ENCODE measurements at regions of chrX and their contacts with region 1.

Region 1: DNA sequence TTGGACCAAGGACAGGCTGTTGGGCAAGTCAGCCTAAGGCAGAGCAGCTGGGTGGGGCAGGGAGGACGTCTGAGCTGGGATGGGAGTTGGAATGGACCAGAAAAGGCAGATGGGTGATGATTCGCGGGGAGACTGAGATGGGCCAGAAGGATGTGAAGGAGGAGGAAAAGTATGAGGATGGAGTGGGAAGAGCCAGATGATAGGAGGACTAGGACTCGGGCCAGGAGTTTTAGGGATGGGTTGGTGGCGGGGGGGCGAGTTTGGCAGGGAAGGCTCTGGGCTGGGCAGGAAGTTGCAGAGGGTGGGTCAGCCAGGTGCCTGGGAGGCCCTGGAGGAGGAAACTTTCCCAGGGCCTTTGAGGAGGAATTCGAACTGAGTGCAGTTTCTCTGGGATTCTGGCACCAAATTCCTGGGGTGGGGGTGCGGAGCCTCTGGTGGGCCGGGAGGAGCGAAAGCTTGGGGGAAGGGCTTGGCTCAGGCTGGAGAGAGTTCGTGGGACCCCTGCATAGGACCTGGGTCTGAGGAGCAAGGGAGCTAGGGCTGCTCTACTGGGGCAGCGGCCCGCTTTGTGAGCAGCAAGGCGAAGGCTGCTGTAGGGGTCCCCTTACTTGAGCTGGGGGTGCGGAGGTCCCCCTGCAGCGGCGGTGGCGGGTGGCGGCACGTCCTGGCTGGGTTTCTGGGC is 8.7 kb upstream of the TIMP1 start:
- DNase-seq: peak; percentile 77 to 86 (median 83)
- H3K4me3 ChIP-seq: peak overlapping the region; percentile 31
- H3K27ac ChIP-seq: peak overlapping the region; percentile 78 to 90
- H3K4me1 ChIP-seq: peaks cover 7% of the 10 kb centered on the region
- H3K27me3 ChIP-seq: no peaks in the 10 kb centered on the region
- CTCF ChIP-seq: no peak
- EP300 ChIP-seq: no peak
- POLR2A ChIP-seq: no peak

Region 2: GRCh38 chrX:46180258-46180687 is 1393.3 kb before region 1 on chrX:
- intact Hi-C with region 1: no loop called
- DNase-seq: no peak
- H3K4me3 ChIP-seq: no peak overlapping the region
- H3K27ac ChIP-seq: no peak overlapping the region
- H3K4me1 ChIP-seq: no peaks in the 10 kb centered on the region
- H3K27me3 ChIP-seq: no peaks in the 10 kb centered on the region
- CTCF ChIP-seq: no peak
- EP300 ChIP-seq: no peak
- POLR2A ChIP-seq: no peak

Region 3: DNA sequence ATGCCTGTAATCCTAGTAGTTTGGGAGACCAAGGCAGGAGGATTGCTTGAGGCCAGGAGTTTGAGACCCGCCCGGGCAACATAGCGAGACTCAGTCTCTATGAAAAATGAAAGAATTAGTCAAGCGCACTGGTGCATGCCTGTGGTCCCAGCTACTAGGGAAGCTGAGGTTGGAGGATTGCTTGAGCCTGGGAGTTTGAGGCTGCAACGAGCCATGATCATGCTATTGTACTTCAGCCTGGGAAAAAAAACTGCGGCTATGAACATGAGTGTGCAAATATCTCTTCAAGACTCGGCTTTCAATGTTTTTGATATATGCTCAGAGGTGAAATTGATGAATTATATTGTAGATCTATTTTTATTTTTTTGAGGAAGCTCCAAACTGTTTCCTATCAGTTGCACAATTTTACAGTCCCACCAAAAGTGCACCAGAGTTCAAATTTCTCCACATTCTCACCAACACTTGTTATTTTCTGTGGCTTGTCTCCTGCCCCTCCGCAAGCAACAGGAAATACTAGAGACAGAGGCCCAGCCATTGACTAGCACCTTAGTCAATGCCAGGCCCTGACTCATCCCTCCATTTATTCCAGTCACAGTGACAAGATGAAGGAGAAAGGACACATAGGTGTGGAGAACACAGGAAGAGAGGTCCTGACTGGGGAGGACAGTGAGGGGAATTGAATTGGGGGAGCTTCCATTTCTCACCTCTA is 57.4 kb before region 1 on chrX:
- intact Hi-C with region 1: loop called in 1 of 4 experiments (anchors 10 kb)
- DNase-seq: no peak
- H3K4me3 ChIP-seq: no peak overlapping the region
- H3K27ac ChIP-seq: no peak overlapping the region
- H3K4me1 ChIP-seq: no peaks in the 10 kb centered on the region
- H3K27me3 ChIP-seq: no peaks in the 10 kb centered on the region
- CTCF ChIP-seq: no peak
- EP300 ChIP-seq: no peak
- POLR2A ChIP-seq: no peak

Region 4: DNA sequence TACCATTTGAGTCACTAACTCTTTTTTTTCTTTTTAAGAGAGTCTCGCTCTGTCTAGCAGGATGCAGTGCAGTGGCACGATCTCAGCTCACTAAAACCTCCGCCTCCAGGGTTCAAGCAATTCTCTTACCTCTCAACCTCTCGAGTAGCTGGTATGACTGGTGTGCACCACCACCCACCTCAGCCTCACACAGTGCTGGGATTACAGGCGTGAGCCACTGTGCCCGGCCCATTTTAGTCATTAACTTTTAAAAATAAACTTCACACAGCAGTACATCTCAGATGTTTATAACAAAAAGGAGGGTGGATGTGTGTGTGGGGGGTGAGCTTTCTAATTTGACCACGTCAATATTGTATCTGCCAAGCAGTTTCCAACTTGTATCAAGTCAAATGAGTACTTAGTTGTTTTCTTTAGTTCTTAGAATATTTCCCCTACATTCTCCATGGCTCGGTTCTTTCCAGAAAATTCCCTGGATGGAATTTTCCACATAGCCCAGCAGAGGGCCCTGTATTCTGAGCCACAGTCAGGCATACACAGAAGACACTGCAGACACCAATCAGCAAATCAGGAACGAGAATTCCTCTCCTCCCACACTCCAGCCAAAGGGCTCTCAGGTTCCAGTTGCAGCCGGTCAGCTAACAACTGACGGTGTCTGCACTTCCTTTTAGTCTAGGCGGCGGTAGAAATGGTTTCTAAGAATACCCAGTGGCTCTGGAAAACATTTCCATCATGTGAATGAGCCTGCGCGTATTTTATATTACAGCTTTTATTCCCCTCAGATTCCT is 32.6 kb before region 1 on chrX:
- intact Hi-C with region 1: no loop called
- DNase-seq: peak; percentile 70 to 85 (median 76)
- H3K4me3 ChIP-seq: no peak overlapping the region
- H3K27ac ChIP-seq: peak overlapping the region; percentile 15 to 61
- H3K4me1 ChIP-seq: no peaks in the 10 kb centered on the region
- H3K27me3 ChIP-seq: no peaks in the 10 kb centered on the region
- CTCF ChIP-seq: peak; percentile 32 to 78 (median 66)
- EP300 ChIP-seq: no peak
- POLR2A ChIP-seq: peak; percentile 53

Region 5: GRCh38 chrX:47690175-47690574 is 116.6 kb after region 1 on chrX:
- intact Hi-C with region 1: no loop called
- DNase-seq: no peak
- H3K4me3 ChIP-seq: no peak overlapping the region
- H3K27ac ChIP-seq: no peak overlapping the region
- H3K4me1 ChIP-seq: no peaks in the 10 kb centered on the region
- H3K27me3 ChIP-seq: no peaks in the 10 kb centered on the region
- CTCF ChIP-seq: no peak
- EP300 ChIP-seq: no peak
- POLR2A ChIP-seq: no peak

Region 6: GRCh38 chrX:47807548-47807947 is 234.0 kb after region 1 on chrX:
- intact Hi-C with region 1: no loop called
- DNase-seq: no peak
- H3K4me3 ChIP-seq: no peak overlapping the region
- H3K27ac ChIP-seq: no peak overlapping the region
- H3K4me1 ChIP-seq: no peaks in the 10 kb centered on the region
- H3K27me3 ChIP-seq: no peaks in the 10 kb centered on the region
- CTCF ChIP-seq: no peak
- EP300 ChIP-seq: no peak
- POLR2A ChIP-seq: no peak